ENCODE measurements at regions of chr3 and their contacts with region 1.

Region 1: DNA sequence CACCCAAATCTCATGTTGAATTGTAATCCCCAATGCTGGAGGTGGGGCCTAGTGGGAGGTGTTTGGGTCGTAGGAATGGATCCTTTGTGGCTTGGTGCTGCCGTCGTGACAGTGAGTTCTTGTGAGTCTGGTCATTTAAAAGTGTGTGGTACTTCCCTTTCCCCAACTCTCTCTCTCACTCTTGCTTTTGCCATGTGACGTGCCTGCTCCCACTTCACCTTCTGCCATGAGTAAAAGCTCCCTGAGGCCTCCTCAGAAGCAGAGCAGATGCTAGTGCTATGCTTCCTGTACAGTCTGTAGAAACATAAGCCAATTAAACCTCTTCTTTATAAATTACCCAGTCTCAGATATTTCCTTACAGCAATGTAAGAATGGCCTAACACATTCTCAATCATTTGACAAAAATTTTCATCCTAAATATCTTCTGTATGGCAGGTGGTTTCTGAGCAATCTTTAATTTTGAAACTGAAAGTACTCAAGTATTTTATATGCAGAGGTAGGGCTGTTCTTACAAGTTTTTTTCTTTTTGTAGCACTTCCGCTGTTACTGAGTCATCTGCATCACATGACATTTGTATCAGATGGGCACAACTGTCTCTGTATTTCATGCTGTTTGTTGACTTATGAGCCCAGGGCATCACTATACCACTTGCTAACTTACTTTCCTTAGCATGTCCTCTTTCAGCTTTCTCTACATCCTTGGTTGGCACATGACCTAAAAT is 8.8 kb downstream of the RPL39L start:
- DNase-seq: peak in 6 of 9 experiments; percentile 17 to 92 (median 36)
- ATAC-seq: peak; percentile 95
- H3K4me3 ChIP-seq: no peak overlapping the region
- H3K4me3 Mint-ChIP-seq: peak overlapping the region; percentile 51
- H3K27ac ChIP-seq: peak overlapping the region; percentile 38 to 95
- H3K27ac Mint-ChIP-seq: peak overlapping the region; percentile 96
- H3K4me1 ChIP-seq: peaks cover 17% of the 10 kb centered on the region
- H3K4me1 Mint-ChIP-seq: peaks cover 34% of the 10 kb centered on the region
- H3K27me3 ChIP-seq: no peaks in the 10 kb centered on the region
- H3K27me3 Mint-ChIP-seq: no peaks in the 10 kb centered on the region
- CTCF ChIP-seq: no peak

Region 2: DNA sequence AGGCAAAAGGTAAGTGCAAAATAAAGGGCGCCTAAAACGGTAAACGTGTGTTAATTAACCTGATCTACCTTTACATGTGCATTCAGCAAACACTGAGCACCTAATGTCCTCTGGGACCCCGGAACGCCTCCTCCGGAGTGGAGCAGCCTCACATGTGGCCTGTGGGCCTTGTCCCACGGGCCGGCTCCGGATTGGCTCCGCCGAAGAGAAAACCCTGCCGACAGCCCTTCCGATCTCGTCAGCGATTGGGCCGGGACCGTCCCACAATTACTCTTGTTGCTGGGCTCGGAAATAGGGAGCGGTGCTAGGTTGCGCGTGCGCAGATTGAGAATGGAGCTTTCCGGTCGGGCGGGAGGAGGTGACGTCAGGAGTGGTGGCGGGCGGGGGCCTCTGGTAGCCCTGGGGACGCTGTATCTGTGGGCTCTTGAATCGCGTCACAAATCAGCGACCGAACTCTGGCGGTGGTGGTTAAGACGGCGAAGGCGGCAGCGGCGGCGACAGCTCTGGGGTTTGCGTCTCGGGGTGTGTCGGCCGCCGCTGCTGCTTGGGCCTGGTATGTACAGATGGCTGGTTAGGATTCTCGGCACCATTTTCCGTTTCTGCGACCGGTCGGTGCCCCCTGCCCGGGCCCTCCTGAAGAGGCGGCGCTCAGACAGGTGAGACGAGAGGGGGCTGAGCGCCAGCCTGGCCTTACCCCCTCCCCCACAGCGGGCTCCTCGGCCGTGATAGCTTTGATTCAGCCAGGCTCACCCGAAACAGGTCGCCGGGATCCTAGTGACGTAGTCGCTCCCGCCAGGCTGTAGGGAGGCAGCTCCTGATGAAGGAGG is 1544.4 kb before region 1 on chr3 and contains the start of gene SENP2:
- CTCF ChIA-PET with region 1: no interaction called
- POLR2A ChIA-PET with region 1: no interaction called
- intact Hi-C with region 1: loop called (anchors 5 kb)
- DNase-seq: peak; percentile 99 to 100 (median 100)
- ATAC-seq: peak; percentile 87
- H3K4me3 ChIP-seq: peak within 1 kb of the TSS; percentile 74 to 100
- H3K4me3 Mint-ChIP-seq: peak within 1 kb of the TSS; percentile 85
- H3K27ac ChIP-seq: peak within 1 kb of the TSS; percentile 92 to 99
- H3K27ac Mint-ChIP-seq: peak within 1 kb of the TSS; percentile 92
- H3K4me1 ChIP-seq: peaks cover 28% of the 10 kb centered on the region
- H3K4me1 Mint-ChIP-seq: peaks cover 36% of the 10 kb centered on the region
- H3K27me3 ChIP-seq: no peaks in the 10 kb centered on the region
- H3K27me3 Mint-ChIP-seq: no peaks in the 10 kb centered on the region
- CTCF ChIP-seq: no peak
- total RNA-seq, gene SENP2: 57.0 to 69.6 TPM

Region 3: DNA sequence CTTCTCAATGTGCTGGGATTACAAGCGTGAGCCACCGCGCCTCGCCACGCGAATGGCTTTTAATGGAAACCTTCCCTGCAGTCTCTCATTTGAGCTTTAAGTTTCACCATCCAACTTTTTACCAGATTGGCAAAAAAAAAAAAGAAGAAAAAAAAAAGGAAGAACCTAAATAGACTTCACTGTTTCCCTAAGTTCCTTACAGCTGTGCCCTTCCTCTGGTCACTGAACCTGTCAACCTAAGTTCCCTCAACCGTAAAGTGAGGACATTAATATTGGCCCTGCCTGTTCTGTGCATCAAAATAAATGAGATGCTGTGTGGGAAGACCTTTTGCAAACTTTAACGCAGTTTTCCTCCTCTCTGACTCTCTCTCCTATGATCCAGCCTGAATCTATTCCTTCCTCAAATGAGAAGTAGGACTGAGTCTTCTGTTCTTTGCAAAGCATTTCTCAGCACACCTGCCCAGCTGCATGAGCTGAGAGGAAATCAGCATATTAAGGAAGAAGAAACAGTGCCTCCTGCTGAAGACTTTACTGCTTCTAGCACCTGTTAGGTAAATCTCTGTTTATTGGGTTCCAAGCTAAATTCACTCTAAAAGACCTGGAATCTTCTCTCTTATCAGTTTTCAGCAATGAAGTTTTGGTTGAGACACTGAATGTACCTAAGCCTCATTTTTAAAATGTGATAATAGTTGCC is 922.1 kb before region 1 on chr3:
- CTCF ChIA-PET with region 1: no interaction called
- POLR2A ChIA-PET with region 1: no interaction called
- intact Hi-C with region 1: no loop called
- DNase-seq: peak in 1 of 9 experiments; percentile 17
- ATAC-seq: no peak
- H3K4me3 ChIP-seq: no peak overlapping the region
- H3K4me3 Mint-ChIP-seq: no peak overlapping the region
- H3K27ac ChIP-seq: no peak overlapping the region
- H3K27ac Mint-ChIP-seq: no peak overlapping the region
- H3K4me1 ChIP-seq: no peaks in the 10 kb centered on the region
- H3K4me1 Mint-ChIP-seq: no peaks in the 10 kb centered on the region
- H3K27me3 ChIP-seq: no peaks in the 10 kb centered on the region
- H3K27me3 Mint-ChIP-seq: peaks cover 3% of the 10 kb centered on the region
- CTCF ChIP-seq: no peak

Region 4: GRCh38 chr3:186806089-186807055 is 324.1 kb before region 1 on chr3 and contains the start of gene RFC4:
- CTCF ChIA-PET with region 1: no interaction called
- POLR2A ChIA-PET with region 1: no interaction called
- intact Hi-C with region 1: loop called in 1 of 2 experiments (anchors 5 kb)
- DNase-seq: peak; percentile 60 to 91 (median 85)
- ATAC-seq: peak; percentile 86
- H3K4me3 ChIP-seq: peak within 1 kb of the TSS; percentile 81 to 97
- H3K4me3 Mint-ChIP-seq: peak within 1 kb of the TSS; percentile 97
- H3K27ac ChIP-seq: peak within 1 kb of the TSS; percentile 89 to 92
- H3K27ac Mint-ChIP-seq: peak within 1 kb of the TSS; percentile 97
- H3K4me1 ChIP-seq: peaks cover 23% of the 10 kb centered on the region
- H3K4me1 Mint-ChIP-seq: peaks cover 22% of the 10 kb centered on the region
- H3K27me3 ChIP-seq: no peaks in the 10 kb centered on the region
- H3K27me3 Mint-ChIP-seq: no peaks in the 10 kb centered on the region
- CTCF ChIP-seq: no peak
- total RNA-seq, gene RFC4: 12.7 to 13.9 TPM

Region 5: GRCh38 chr3:187150599-187150998 is 20.1 kb after region 1 on chr3:
- CTCF ChIA-PET with region 1: interaction called, 19 read pairs
- POLR2A ChIA-PET with region 1: interaction called, 5 read pairs
- intact Hi-C with region 1: no loop called
- DNase-seq: peak; percentile 37 to 80 (median 65)
- ATAC-seq: peak; percentile 56
- H3K4me3 ChIP-seq: no peak overlapping the region
- H3K4me3 Mint-ChIP-seq: no peak overlapping the region
- H3K27ac ChIP-seq: no peak overlapping the region
- H3K27ac Mint-ChIP-seq: no peak overlapping the region
- H3K4me1 ChIP-seq: no peaks in the 10 kb centered on the region
- H3K4me1 Mint-ChIP-seq: peaks cover 9% of the 10 kb centered on the region
- H3K27me3 ChIP-seq: no peaks in the 10 kb centered on the region
- H3K27me3 Mint-ChIP-seq: no peaks in the 10 kb centered on the region
- CTCF ChIP-seq: peak; percentile 39

Region 6: DNA sequence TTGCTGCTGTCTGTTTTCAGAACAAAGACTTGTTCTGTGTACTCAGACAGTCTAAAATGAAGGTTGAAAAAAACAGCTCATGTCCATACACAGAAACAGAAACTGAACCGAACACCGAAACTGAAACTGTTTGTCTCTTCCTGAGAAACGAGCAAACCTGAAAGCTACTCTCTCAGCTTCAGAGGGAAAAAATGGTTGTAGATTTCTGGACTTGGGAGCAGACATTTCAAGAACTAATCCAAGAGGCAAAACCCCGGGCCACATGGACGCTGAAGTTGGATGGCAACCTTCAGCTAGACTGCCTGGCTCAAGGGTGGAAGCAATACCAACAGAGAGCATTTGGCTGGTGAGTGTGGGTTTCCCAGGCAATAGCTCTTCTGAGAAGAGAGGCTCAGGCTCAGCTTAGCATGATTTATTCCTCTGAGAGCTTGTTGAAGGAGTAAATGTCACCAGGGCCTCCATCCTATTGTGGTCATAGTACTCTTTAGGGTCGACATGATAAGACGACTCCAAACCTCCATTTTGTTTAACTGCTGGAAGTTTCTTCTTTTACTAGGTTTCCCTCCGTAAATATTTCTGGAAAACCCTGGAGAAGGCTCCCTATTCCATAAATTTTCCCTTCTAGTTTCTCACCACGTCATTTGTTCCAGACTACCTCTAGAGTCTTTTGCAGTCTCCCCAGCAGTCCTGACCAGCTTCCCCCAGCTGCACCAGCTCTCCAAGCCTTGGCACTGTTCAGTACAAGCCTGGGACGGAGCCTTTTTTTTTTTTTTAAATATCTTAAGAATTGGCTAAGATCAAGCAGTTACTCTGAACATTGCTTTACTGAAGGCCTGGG is 238.0 kb after region 1 on chr3 and contains the start of gene RTP4:
- CTCF ChIA-PET with region 1: no interaction called
- POLR2A ChIA-PET with region 1: no interaction called
- intact Hi-C with region 1: loop called in 1 of 2 experiments (anchors 5 kb)
- DNase-seq: peak in 6 of 9 experiments; percentile 20 to 80 (median 48)
- ATAC-seq: peak; percentile 85
- H3K4me3 ChIP-seq: peak within 1 kb of the TSS; percentile 64 to 93
- H3K4me3 Mint-ChIP-seq: peak within 1 kb of the TSS; percentile 100
- H3K27ac ChIP-seq: peak within 1 kb of the TSS; percentile 77 to 88
- H3K27ac Mint-ChIP-seq: peak within 1 kb of the TSS; percentile 99
- H3K4me1 ChIP-seq: peaks cover 12% of the 10 kb centered on the region
- H3K4me1 Mint-ChIP-seq: peaks cover 21% of the 10 kb centered on the region
- H3K27me3 ChIP-seq: no peaks in the 10 kb centered on the region
- H3K27me3 Mint-ChIP-seq: no peaks in the 10 kb centered on the region
- CTCF ChIP-seq: no peak
- total RNA-seq, gene RTP4: 1.1 to 1.5 TPM

Measured in CD8-positive, alpha-beta T cell (primary cell).